ENCODE measurements at regions of chr9 and their contacts with region 1.

Region 1: GRCh38 chr9:19456996-19457692 is 48.3 kb downstream of the ACER2 start:
- DNase-seq: peak; percentile 80
- ATAC-seq: peak; percentile 95
- H3K4me3 ChIP-seq: peak overlapping the region in 1 of 5 experiments; percentile 19
- H3K4me3 Mint-ChIP-seq: peak overlapping the region; percentile 23
- H3K27ac ChIP-seq: no peak overlapping the region
- H3K27ac Mint-ChIP-seq: no peak overlapping the region
- H3K4me1 ChIP-seq: peaks cover 7% of the 10 kb centered on the region in 2 donors
- H3K4me1 Mint-ChIP-seq: peaks cover 13% of the 10 kb centered on the region
- H3K27me3 ChIP-seq: no peaks in the 10 kb centered on the region
- H3K27me3 Mint-ChIP-seq: no peaks in the 10 kb centered on the region
- CTCF ChIP-seq: peak; percentile 99

Region 2: GRCh38 chr9:18255158-18255629 is 1202.0 kb before region 1 on chr9:
- CTCF ChIA-PET with region 1: interaction called, 37 read pairs
- POLR2A ChIA-PET with region 1: no interaction called
- intact Hi-C with region 1: no loop called
- DNase-seq: peak; percentile 65
- ATAC-seq: peak; percentile 70
- H3K4me3 ChIP-seq: no peak overlapping the region
- H3K4me3 Mint-ChIP-seq: no peak overlapping the region
- H3K27ac ChIP-seq: no peak overlapping the region
- H3K27ac Mint-ChIP-seq: no peak overlapping the region
- H3K4me1 ChIP-seq: no peaks in the 10 kb centered on the region
- H3K4me1 Mint-ChIP-seq: no peaks in the 10 kb centered on the region
- H3K27me3 ChIP-seq: peaks cover 0 to 5% (median 0%) of the 10 kb centered on the region in 4 experiments
- H3K27me3 Mint-ChIP-seq: peaks cover 8% of the 10 kb centered on the region
- CTCF ChIP-seq: peak; percentile 97

Region 3: GRCh38 chr9:19102631-19103345 is 354.4 kb before region 1 on chr9 and contains the start of gene HAUS6:
- CTCF ChIA-PET with region 1: interaction called, 3 read pairs
- POLR2A ChIA-PET with region 1: no interaction called
- intact Hi-C with region 1: loop called (anchors 1 kb)
- DNase-seq: peak; percentile 96
- ATAC-seq: peak; percentile 95
- H3K4me3 ChIP-seq: peak within 1 kb of the TSS; percentile 63 to 92 (median 82)
- H3K4me3 Mint-ChIP-seq: peak within 1 kb of the TSS; percentile 98
- H3K27ac ChIP-seq: peak within 1 kb of the TSS; percentile 53 to 88
- H3K27ac Mint-ChIP-seq: peak within 1 kb of the TSS; percentile 94
- H3K4me1 ChIP-seq: peaks cover 3 to 16% of the 10 kb centered on the region in 2 donors
- H3K4me1 Mint-ChIP-seq: peaks cover 22% of the 10 kb centered on the region
- H3K27me3 ChIP-seq: no peaks in the 10 kb centered on the region
- H3K27me3 Mint-ChIP-seq: no peaks in the 10 kb centered on the region
- CTCF ChIP-seq: peak; percentile 38
- total RNA-seq, gene HAUS6: 13.5 and 14.6 TPM in 2 replicates

Region 4: GRCh38 chr9:19358701-19359100 is 98.4 kb before region 1 on chr9:
- CTCF ChIA-PET with region 1: interaction called, 10 read pairs
- POLR2A ChIA-PET with region 1: no interaction called
- intact Hi-C with region 1: no loop called
- DNase-seq: no peak
- ATAC-seq: no peak
- H3K4me3 ChIP-seq: no peak overlapping the region
- H3K4me3 Mint-ChIP-seq: no peak overlapping the region
- H3K27ac ChIP-seq: no peak overlapping the region
- H3K27ac Mint-ChIP-seq: no peak overlapping the region
- H3K4me1 ChIP-seq: no peaks in the 10 kb centered on the region
- H3K4me1 Mint-ChIP-seq: no peaks in the 10 kb centered on the region
- H3K27me3 ChIP-seq: no peaks in the 10 kb centered on the region
- H3K27me3 Mint-ChIP-seq: no peaks in the 10 kb centered on the region
- CTCF ChIP-seq: no peak

Region 5: GRCh38 chr9:19408693-19409400 is 48.3 kb before region 1 on chr9 and contains the start of gene ACER2:
- CTCF ChIA-PET with region 1: interaction called, 5 read pairs
- POLR2A ChIA-PET with region 1: no interaction called
- intact Hi-C with region 1: loop called (anchors 2 kb)
- DNase-seq: peak; percentile 92
- ATAC-seq: peak; percentile 97
- H3K4me3 ChIP-seq: peak within 1 kb of the TSS; percentile 77 to 94 (median 92)
- H3K4me3 Mint-ChIP-seq: peak within 1 kb of the TSS; percentile 94
- H3K27ac ChIP-seq: peak within 1 kb of the TSS; percentile 31 to 51
- H3K27ac Mint-ChIP-seq: peak within 1 kb of the TSS; percentile 86
- H3K4me1 ChIP-seq: peaks cover 12 to 15% of the 10 kb centered on the region in 2 donors
- H3K4me1 Mint-ChIP-seq: peaks cover 12% of the 10 kb centered on the region
- H3K27me3 ChIP-seq: no peaks in the 10 kb centered on the region
- H3K27me3 Mint-ChIP-seq: no peaks in the 10 kb centered on the region
- CTCF ChIP-seq: no peak
- total RNA-seq, gene ACER2: 5.5 and 6.1 TPM in 2 replicates

Measured in B cell (primary cell).